IMR-90 (cell line): ENCODE measurements at regions of chr7 and their contacts with region 1.

Region 1: GRCh38 chr7:56033671-56034432 is 17.4 kb downstream of the PSPH start:
- DNase-seq: peak; percentile 70
- ATAC-seq: peak; percentile 91
- H3K4me3 ChIP-seq: peak overlapping the region; percentile 80
- H3K27ac ChIP-seq: peak overlapping the region; percentile 68
- H3K4me1 ChIP-seq: peaks cover 6% of the 10 kb centered on the region
- H3K27me3 ChIP-seq: no peaks in the 10 kb centered on the region
- CTCF ChIP-seq: peak; percentile 30; the same call in 1 of the 2 replicates
- POLR2A ChIP-seq: no peak
- RAD21 ChIP-seq: peak; percentile 29

Region 2: DNA sequence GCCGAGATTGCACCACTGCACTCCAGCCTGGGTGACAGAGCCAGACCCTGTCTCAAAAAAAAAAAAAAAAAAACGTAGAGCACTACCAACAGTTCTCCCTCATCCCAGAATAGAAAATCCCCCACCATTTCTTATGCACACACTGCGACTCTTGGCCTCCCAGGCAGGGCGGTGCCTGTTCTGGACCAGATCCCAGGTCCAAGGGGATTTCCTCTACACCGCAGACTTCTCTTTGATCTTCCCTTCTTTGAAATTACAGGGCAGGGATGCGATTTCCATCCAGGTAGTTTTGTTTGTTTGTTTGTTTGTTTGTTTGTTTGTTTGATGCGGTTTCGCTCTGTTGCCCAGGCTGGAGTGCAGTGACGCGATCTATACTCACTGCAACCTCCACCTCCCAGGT is 263.1 kb before region 1 on chr7:
- CTCF ChIA-PET with region 1: no interaction called
- POLR2A ChIA-PET with region 1: no interaction called
- dilution Hi-C with region 1: no loop called
- in situ Hi-C with region 1: no loop called
- intact Hi-C with region 1: no loop called
- DNase-seq: no peak
- ATAC-seq: no peak
- H3K4me3 ChIP-seq: no peak overlapping the region
- H3K27ac ChIP-seq: no peak overlapping the region
- H3K4me1 ChIP-seq: no peaks in the 10 kb centered on the region
- H3K27me3 ChIP-seq: no peaks in the 10 kb centered on the region
- CTCF ChIP-seq: no peak
- POLR2A ChIP-seq: no peak
- RAD21 ChIP-seq: no peak

Region 3: DNA sequence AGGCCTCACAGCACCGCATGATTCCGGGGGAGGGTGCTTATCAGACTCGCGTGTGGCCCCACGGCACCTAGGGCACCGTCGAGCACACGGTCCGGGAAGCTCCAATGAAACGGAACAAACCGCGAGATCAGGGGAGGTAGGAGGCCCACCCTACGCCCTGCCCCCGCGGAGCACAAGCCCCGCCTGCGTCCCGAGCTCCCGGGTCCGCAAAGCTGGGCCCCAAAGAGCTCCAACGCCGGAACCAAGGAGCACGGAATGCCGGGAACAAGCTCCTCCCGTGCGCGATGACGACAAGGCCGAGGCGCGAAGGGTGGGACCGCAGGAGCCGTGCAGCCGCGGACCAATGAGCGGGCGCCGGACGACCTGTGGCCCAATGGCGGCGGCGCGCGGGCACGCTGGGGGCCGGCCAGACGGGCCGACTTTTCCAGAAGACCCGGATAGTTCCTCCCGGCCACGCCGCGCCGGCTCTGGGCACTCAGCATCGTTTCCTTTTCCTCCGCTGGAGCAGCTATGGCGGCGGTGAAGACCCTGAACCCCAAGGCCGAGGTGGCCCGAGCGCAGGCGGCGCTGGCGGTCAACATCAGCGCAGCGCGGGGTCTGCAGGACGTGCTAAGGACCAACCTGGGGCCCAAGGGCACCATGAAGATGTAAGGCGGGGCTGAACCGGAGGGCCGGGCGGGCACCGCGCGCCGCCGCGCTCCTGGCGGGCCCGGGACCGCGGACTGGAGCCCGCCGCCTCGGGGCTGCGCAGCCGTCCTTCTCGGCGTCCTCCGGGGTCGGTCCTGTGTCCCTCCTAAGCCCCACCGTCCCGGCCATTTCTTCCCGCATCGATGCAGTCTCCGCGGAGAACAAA is 17.7 kb after region 1 on chr7 and contains the starts of genes CCT6A and PSPH:
- CTCF ChIA-PET with region 1: no interaction called
- POLR2A ChIA-PET with region 1: no interaction called
- dilution Hi-C with region 1: no loop called
- in situ Hi-C with region 1: no loop called
- intact Hi-C with region 1: loop called (anchors 2 kb)
- DNase-seq: peak; percentile 98
- ATAC-seq: peak; percentile 95
- H3K4me3 ChIP-seq: peak within 1 kb of the TSS; percentile 81
- H3K27ac ChIP-seq: peak within 1 kb of the TSS; percentile 92
- H3K4me1 ChIP-seq: peaks cover 7% of the 10 kb centered on the region; the same call in 1 of the 2 replicates
- H3K27me3 ChIP-seq: no peaks in the 10 kb centered on the region
- CTCF ChIP-seq: no peak
- POLR2A ChIP-seq: peak; percentile 88
- RAD21 ChIP-seq: no peak
- total RNA-seq, gene CCT6A: 265 and 311 TPM in 2 replicates
- total RNA-seq, gene PSPH: 48.4 and 55.8 TPM in 2 replicates